ENCODE measurements at regions of chr6 and their contacts with region 1.

Region 1: GRCh38 chr6:37239950-37240713 is 17.4 kb upstream of the TBC1D22B start:
- DNase-seq: peak; percentile 91 to 98 (median 95)
- ATAC-seq: peak; percentile 49 to 81 (median 74)
- H3K4me3 ChIP-seq: no peak overlapping the region
- H3K27ac ChIP-seq: peak overlapping the region in 11 of 12 donors; percentile 62 to 89 (median 77)
- H3K4me1 ChIP-seq: peaks cover 3 to 64% (median 35%) of the 10 kb centered on the region in 12 donors
- H3K27me3 ChIP-seq: no peaks in the 10 kb centered on the region
- CTCF ChIP-seq: no peak
- POLR2A ChIP-seq: no peak

Region 2: GRCh38 chr6:36360241-36361054 is 879.7 kb before region 1 on chr6:
- intact Hi-C with region 1: no loop called
- DNase-seq: peak; percentile 74 to 87 (median 77)
- ATAC-seq: peak; percentile 83 to 92 (median 91)
- H3K4me3 ChIP-seq: no peak overlapping the region
- H3K27ac ChIP-seq: peak overlapping the region in 3 of 12 donors; percentile 15 to 39 (median 33)
- H3K4me1 ChIP-seq: peaks cover 0 to 44% (median 13%) of the 10 kb centered on the region in 12 donors
- H3K27me3 ChIP-seq: peaks cover 0 to 15% (median 0%) of the 10 kb centered on the region in 9 donors
- CTCF ChIP-seq: peak; percentile 74 to 86 (median 84)
- POLR2A ChIP-seq: no peak

Region 3: DNA sequence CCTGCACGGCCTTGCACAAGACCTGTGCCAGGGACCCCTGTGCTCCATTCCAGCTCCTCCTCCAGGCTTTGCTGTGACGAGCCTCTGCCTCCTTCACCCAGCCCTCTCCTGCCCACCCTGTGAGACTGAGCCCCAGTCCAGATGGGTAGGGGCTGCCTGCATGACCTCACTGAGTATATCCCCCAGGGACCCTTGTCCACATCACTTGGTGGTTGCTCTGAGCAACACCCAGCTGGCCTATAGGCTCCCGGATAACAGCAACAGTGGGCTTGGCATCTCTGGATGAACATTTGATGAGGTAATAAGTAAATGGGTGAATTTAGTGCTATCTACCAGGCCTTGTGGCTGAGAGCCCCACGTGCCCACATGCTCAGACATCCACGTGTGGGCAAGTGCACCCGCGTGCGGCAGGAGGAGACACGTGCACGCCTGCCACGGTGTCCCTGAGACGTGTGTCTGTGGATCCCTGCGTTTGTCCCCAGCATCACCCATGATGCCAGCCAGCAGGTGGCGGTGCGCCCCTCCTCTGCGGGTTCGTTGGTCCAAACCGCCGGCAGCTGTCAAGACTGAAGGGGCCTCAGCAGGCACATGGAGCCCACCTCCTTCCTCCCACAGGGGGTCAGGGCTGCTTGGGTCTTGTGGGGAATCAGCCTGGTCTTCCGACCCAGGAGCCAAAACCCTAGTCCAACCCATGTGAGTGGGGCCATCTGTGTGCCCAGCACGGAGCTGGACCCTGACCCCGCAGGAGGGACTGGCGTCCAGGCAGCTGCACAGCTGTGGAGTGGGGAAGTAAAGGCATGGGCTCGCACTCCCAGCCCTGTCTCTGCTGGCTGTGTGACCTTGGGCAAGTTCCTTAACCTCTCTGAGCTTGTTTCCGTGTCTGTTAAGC is 188.8 kb before region 1 on chr6:
- intact Hi-C with region 1: no loop called
- DNase-seq: peak; percentile 89 to 95 (median 90)
- ATAC-seq: peak; percentile 41 to 86 (median 81)
- H3K4me3 ChIP-seq: peak overlapping the region in 1 of 12 donors; percentile 36
- H3K27ac ChIP-seq: peak overlapping the region in 2 of 12 donors; percentile 32 to 93
- H3K4me1 ChIP-seq: peaks cover 0 to 55% (median 14%) of the 10 kb centered on the region in 12 donors
- H3K27me3 ChIP-seq: no peaks in the 10 kb centered on the region
- CTCF ChIP-seq: peak; percentile 82 to 96 (median 90)
- POLR2A ChIP-seq: no peak

Region 4: GRCh38 chr6:37257634-37258404 is 17.7 kb after region 1 on chr6 and contains the starts of genes TBC1D22B and TMEM217:
- intact Hi-C with region 1: loop called in 1 of 10 experiments (anchors 1 kb)
- DNase-seq: peak; percentile 97 to 98 (median 97)
- ATAC-seq: peak; percentile 100
- H3K4me3 ChIP-seq: peak within 1 kb of the TSS; percentile 58 to 98 (median 86)
- H3K27ac ChIP-seq: peak within 1 kb of the TSS; percentile 57 to 97 (median 86)
- H3K4me1 ChIP-seq: peaks cover 0 to 47% (median 18%) of the 10 kb centered on the region in 12 donors
- H3K27me3 ChIP-seq: no peaks in the 10 kb centered on the region
- CTCF ChIP-seq: no peak
- POLR2A ChIP-seq: peak in 1 of 2 donors; percentile 62
- total RNA-seq, gene TBC1D22B: 5.5 to 10.0 (median 7.3) TPM
- total RNA-seq, gene TMEM217: 0.23 to 2.1 (median 0.75) TPM in 6 of 9 donors, not detected in the others

Measured in heart left ventricle (tissue), 16 donors.